ENCODE measurements at regions of chr6 and their contacts with region 1.

Region 1: GRCh38 chr6:12911387-12911960 is 194.9 kb downstream of the PHACTR1 start:
- DNase-seq: no peak
- ATAC-seq: no peak

Region 2: DNA sequence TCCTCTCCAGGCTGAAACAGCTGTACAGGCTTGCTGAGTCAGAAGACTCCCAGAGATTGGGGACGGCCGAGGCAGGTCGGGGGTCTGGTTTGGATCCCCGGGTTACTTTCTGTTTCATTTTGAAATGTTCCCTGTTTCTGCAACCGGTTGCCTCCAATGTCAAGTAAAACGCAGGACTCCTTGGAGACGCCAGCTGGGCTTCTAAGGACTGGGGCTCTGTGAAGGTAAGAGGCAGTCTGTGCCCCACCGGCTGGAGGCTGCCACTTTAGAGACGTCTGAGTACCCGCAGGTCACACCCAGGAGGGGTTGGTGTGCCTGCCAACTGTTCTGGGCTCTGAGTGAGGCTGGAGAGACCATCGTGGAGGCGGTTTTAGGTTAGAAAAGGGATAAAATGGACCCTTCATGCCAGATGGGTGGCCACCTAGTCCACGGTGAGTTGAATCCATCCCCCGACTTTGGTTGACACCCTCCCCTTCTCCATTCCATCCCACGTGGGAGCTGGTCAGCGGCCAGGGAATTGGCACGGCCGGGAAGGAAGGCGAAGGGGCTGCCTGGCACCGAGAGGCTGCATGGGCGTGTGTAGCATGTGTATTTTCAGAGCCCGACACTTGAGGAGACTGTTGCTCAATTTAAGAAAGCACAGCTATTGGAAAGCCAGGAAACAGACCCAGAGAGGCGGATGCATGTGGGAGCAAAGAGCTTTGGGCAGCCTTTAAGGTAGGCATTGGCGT is 46.0 kb after region 1 on chr6:
- intact Hi-C with region 1: loop called (anchors 5 kb)
- DNase-seq: peak; percentile 84
- ATAC-seq: peak; percentile 84

Region 3: DNA sequence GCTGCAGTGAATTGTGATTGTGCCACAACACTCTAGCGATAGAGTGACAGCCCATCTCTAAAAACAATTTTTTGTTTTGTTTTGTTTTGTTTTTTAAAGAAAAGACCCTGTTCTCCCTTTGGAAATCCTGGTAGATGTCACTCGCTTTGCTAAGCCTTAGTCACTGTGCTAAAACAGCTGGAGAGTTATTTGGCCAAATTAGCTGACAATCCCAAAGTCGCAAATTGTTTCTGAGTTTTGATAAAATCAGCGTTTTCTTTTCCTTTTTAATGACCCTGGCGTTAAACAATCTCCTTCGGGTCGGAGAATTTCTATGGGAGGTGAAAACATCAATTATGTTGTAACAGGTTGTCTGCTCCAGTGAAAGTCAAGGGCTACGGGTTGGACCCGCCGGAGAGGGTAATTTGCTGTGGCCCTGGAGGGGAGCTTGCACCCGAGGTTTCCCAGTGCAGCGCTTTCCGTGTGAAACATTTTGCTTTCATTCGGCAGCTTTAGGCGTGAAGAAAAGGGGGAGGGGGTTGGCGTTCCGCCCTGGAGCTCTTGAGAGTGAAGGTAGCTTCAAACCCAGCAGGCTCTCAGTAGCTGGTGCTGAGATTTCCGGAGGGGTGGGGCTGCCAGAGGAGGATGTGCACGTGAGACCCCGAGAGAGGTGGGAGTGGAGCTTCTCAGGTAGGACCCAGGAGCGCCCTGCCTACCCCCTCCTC is 101.7 kb after region 1 on chr6:
- intact Hi-C with region 1: loop called (anchors 5 kb)
- DNase-seq: peak; percentile 75
- ATAC-seq: peak; percentile 41

Region 4: DNA sequence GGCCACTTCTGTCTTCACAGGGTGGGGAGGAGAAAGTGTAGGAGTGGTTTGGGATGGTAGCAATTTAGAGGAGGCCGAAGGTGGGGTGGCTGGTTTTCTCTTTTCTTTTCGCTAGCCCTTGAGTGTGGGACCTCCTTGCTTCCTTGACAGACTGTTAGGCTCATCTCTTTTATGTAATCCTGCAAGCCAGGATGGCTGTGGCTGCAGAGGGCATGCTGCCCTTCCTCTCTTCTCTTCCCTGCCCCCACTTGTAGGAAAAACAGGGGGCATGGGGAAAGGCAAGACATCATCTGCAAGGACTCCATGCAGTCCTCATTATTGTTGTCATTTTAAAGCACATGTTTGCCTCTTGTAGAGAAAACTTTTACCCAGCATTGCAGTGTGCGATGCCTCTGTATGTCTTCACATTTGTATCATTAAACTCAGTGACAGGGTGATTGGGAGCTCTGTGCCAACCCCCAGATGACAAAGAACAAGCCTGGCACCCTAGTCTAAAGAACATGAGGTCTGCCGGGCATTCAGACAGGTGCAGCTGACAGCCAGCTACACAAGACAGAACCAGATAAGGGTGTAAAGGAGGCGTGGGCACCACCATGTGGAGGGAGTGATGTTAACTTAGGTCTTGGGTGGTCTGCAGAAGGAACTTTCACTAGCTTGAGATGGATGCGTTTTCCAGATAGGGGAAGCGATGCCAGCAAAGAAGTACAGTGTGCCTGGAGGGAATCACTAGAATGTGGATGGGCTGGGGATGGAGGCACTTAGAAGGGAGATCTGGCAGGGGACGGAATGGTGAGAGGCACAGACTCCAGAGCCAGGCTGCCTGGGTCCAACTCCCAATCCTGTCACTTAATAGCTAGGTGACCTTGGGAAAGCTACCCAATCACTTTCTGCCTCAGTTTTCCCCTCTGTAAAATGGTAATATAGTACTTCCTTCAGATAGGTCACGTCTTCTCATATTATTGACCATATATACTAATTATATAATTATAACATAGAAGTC is 209.3 kb after region 1 on chr6:
- intact Hi-C with region 1: loop called (anchors 2 kb)
- DNase-seq: no peak
- ATAC-seq: peak; percentile 94

Region 5: DNA sequence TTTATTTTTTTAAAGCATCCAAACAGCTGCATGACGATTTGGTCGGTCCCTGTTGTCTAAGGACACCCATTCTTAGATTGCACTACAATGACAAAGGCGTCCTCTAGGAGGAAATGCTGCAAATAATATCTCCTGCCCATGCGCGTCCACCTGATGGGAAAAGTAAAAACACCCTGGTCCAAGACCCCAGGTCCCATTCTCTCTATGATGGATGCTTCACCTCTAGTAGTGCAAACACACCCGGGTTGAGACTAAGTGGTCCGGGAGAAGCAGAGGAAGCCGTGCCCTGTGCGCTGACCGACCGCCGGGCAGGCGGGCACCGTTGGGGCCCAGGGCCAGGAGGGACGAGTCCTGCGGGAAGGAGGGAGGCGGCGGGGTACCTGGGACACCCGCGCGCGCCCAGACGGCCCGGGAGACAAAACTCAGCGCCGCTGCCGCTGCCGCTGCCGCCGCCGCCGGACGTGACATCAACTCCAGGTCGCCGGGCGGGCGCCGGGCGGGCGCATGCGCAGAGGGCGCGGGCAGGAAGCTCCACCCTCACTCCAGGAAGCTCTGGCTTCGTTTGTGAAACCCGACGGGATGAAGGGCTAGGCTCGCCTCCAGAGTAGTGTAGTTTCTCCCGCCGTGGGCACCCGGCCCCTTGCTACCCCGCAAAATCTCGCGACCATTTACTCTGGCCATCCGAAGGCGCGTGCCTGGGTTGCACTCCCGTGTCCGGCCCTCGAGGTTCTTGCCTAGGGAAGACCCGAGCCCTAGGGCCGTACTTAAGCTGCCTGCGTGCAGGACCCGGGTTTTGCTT is 416.8 kb after region 1 on chr6 and contains the start of gene TBC1D7:
- intact Hi-C with region 1: loop called (anchors 1 kb)
- DNase-seq: peak; percentile 94
- ATAC-seq: peak; percentile 96
- total RNA-seq, gene TBC1D7: 32.2 TPM

Measured in Right ventricle myocardium inferior (tissue), 1 donor.